ENCODE measurements at regions of chr1 and their contacts with region 1.

Region 1: DNA sequence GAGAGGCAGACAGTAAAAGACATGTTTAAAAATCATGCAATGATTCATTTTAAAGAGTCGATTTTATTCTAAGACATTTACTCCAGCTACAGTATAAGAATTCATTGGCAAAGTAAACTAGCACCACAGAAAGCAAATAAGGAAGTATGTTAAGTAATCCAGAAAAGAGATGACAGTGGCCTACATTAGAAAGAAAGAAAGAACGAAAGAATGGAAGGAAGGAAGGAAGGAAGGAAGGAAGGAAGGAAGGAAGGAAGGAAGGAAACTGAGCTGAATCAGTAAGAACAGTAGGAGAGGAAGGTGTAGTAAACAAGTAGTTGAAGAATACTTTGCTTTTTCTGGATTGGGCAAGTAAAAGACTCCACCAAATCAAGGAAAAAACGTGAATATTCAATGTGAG is 62.2 kb downstream of the ZZZ3 start:
- DNase-seq: peak; percentile 91
- H3K4me3 ChIP-seq: no peak overlapping the region
- H3K27ac ChIP-seq: peak overlapping the region; percentile 93
- H3K4me1 ChIP-seq: peaks cover 72% of the 10 kb centered on the region
- H3K27me3 ChIP-seq: no peaks in the 10 kb centered on the region
- CTCF ChIP-seq: no peak

Region 2: DNA sequence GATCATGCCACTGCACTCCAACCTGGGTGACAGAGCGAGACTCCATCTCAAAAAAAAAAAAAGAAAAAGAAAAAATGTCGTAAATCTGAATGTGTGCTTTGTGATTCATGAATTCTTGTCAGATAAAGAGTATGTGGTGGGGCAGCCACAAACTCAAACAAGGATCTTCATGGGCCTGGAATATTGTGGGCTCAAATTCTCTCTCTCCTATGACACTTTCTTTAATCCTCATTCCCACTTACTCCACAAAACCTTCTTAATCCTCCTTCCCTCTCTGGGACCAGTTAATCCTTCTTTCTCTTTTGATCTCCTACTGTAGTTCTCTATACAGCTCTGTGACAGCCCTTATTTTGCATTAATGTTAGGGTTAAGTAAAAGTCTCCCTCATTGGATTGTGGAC is 226.1 kb before region 1 on chr1:
- CTCF ChIA-PET with region 1: no interaction called
- POLR2A ChIA-PET with region 1: no interaction called
- intact Hi-C with region 1: no loop called
- DNase-seq: no peak
- H3K4me3 ChIP-seq: no peak overlapping the region
- H3K27ac ChIP-seq: no peak overlapping the region
- H3K4me1 ChIP-seq: no peaks in the 10 kb centered on the region
- H3K27me3 ChIP-seq: no peaks in the 10 kb centered on the region
- CTCF ChIP-seq: no peak

Region 3: DNA sequence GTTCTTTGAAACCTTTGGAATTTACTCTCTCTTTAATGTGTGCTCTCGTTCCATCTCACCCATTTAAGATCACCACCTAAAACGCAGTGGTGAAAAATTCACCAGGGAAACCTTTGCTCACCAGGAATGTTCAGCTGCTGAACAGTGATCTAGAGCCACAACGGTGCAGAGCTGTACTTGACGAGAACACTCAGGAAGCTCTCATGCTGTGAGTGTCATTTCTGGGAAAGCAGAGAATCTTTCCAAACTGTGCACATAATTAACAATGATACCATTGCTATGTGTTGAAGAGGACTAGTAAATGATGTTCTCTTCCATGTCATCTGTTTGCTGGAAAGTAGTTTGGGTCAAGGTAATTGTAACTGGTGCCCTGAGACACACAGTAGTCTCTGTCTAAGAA is 55.0 kb before region 1 on chr1:
- CTCF ChIA-PET with region 1: no interaction called
- POLR2A ChIA-PET with region 1: no interaction called
- intact Hi-C with region 1: loop called (anchors 1 kb)
- DNase-seq: peak; percentile 93
- H3K4me3 ChIP-seq: no peak overlapping the region
- H3K27ac ChIP-seq: peak overlapping the region; percentile 74
- H3K4me1 ChIP-seq: peaks cover 27% of the 10 kb centered on the region
- H3K27me3 ChIP-seq: no peaks in the 10 kb centered on the region
- CTCF ChIP-seq: no peak

Region 4: DNA sequence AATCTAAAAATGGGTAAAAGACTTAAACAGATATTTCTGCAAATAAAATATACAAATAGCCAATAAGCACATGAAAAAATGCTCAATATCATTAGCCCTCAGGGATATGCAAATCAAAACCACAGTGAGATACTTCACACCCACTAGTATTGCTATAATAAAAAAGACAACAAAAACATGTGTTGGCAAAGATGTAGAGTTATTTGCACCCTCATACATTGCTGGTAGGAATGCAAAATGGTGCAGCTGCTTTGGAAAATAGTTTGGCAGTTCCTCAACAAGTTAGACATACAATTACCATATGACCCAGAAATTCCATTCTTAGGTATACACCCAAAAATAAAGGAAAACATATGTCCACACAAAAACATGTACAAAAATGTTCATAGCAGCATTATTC is 32.0 kb after region 1 on chr1:
- CTCF ChIA-PET with region 1: no interaction called
- POLR2A ChIA-PET with region 1: no interaction called
- intact Hi-C with region 1: no loop called
- DNase-seq: no peak
- H3K4me3 ChIP-seq: no peak overlapping the region
- H3K27ac ChIP-seq: no peak overlapping the region
- H3K4me1 ChIP-seq: peaks cover 9% of the 10 kb centered on the region
- H3K27me3 ChIP-seq: no peaks in the 10 kb centered on the region
- CTCF ChIP-seq: no peak

Region 5: DNA sequence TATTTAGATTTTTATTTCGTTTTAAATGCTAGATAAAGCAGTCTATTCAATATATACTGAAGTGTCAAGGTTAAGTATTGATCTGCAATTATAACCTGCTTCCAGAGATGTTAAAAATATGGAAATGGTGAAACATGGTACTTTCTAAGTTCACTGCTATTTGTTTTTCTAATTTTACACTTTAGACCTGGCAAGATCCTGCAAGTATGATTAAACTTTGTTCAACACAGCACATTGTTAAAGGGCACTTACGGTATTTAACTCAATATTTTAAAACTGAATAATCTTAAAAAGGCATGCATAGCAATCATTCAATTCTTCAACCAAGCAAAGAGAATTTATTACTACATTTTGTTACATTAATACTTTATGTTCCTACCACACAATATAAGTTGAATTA is 97.9 kb after region 1 on chr1:
- CTCF ChIA-PET with region 1: no interaction called
- POLR2A ChIA-PET with region 1: no interaction called
- intact Hi-C with region 1: no loop called
- DNase-seq: no peak
- H3K4me3 ChIP-seq: no peak overlapping the region
- H3K27ac ChIP-seq: no peak overlapping the region
- H3K4me1 ChIP-seq: no peaks in the 10 kb centered on the region
- H3K27me3 ChIP-seq: no peaks in the 10 kb centered on the region
- CTCF ChIP-seq: no peak

Measured in A673 (cell line).